ENCODE measurements at regions of chr2 and their contacts with region 1.

Region 1: DNA sequence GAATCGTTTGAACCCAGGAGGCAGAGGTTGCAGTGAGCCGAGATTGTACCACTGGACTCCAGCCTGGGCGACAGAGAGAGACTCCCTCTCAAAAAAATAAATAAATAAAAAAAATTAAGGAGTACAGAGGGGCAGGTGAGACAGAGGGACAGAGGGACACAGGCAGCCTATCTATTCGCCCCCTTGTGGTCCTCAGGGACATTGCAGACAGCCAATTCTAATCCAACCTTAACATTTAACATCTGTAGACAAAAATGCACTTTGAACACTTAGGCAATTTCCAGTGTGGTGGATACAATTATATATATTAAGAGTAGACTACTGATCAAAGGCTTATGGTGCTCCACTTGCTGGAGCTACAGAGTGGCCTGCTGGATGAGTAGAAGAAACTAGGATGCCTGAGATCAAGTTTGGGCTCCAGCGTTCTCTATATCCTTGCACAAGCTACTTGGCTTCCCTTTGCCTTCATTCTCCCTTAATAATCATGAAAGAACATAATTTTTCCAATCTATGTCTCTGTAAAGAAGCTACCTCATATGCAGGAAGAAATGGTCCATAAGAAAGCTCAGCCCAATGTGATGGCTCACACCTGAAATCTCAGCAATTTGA is 8.2 kb upstream of the SMARCAL1 start:
- DNase-seq: peak; percentile 51
- ATAC-seq: peak; percentile 51
- H3K4me3 Mint-ChIP-seq: no peak overlapping the region
- H3K27ac Mint-ChIP-seq: no peak overlapping the region
- H3K4me1 Mint-ChIP-seq: no peaks in the 10 kb centered on the region
- H3K27me3 Mint-ChIP-seq: peaks cover 30% of the 10 kb centered on the region

Region 2: GRCh38 chr2:216222650-216223352 is 181.3 kb before region 1 on chr2:
- CTCF ChIA-PET with region 1: interaction called, 13 read pairs
- DNase-seq: no peak
- ATAC-seq: no peak
- H3K4me3 Mint-ChIP-seq: no peak overlapping the region
- H3K27ac Mint-ChIP-seq: peak overlapping the region; percentile 51
- H3K4me1 Mint-ChIP-seq: peaks cover 43% of the 10 kb centered on the region
- H3K27me3 Mint-ChIP-seq: no peaks in the 10 kb centered on the region

Region 3: DNA sequence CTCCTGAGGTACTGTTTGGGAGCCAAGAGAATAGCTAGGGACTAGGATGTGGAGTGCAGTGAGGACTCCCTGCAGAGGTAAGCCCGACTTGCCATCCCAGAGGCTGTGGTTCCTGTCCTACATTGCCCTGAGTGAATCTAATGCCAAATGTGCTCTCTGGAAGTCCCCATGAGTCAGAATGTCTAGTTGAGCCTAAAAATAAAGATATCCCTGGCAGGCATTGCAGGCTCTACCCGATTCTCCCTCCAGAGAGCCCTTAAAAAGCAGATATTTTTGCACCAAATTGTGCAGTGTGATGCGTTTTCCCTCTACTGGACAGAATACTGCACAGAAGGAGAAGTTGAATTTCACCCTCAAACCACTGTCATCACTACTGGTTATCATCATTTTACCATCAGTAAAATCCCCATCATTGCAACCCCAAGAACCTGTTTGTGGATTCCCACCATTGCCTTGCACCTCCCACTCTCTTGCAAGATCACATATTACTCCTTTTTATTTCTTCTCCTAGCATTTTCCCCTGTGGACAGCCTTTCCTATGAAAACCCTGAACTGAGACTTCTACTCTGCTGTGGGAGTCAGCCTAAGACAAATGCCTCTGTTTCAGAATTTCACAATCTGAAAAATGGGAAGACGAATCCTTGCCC is 129.8 kb before region 1 on chr2:
- CTCF ChIA-PET with region 1: no interaction called
- DNase-seq: no peak
- ATAC-seq: no peak
- H3K4me3 Mint-ChIP-seq: no peak overlapping the region
- H3K27ac Mint-ChIP-seq: no peak overlapping the region
- H3K4me1 Mint-ChIP-seq: no peaks in the 10 kb centered on the region
- H3K27me3 Mint-ChIP-seq: peaks cover 23% of the 10 kb centered on the region

Region 4: GRCh38 chr2:216328347-216328746 is 75.8 kb before region 1 on chr2:
- CTCF ChIA-PET with region 1: interaction called, 12 read pairs
- DNase-seq: no peak
- ATAC-seq: no peak
- H3K4me3 Mint-ChIP-seq: no peak overlapping the region
- H3K27ac Mint-ChIP-seq: no peak overlapping the region
- H3K4me1 Mint-ChIP-seq: no peaks in the 10 kb centered on the region
- H3K27me3 Mint-ChIP-seq: peaks cover 9% of the 10 kb centered on the region

Region 5: GRCh38 chr2:216339808-216340631 is 64.1 kb before region 1 on chr2:
- CTCF ChIA-PET with region 1: no interaction called
- DNase-seq: no peak
- ATAC-seq: no peak
- H3K4me3 Mint-ChIP-seq: no peak overlapping the region
- H3K27ac Mint-ChIP-seq: no peak overlapping the region
- H3K4me1 Mint-ChIP-seq: no peaks in the 10 kb centered on the region
- H3K27me3 Mint-ChIP-seq: peaks cover 15% of the 10 kb centered on the region

Region 6: GRCh38 chr2:216352653-216353270 is 51.4 kb before region 1 on chr2:
- CTCF ChIA-PET with region 1: interaction called, 14 read pairs
- DNase-seq: no peak
- ATAC-seq: peak; percentile 63
- H3K4me3 Mint-ChIP-seq: no peak overlapping the region
- H3K27ac Mint-ChIP-seq: peak overlapping the region; percentile 80
- H3K4me1 Mint-ChIP-seq: peaks cover 59% of the 10 kb centered on the region
- H3K27me3 Mint-ChIP-seq: no peaks in the 10 kb centered on the region

Region 7: GRCh38 chr2:216436383-216436782 is 32.3 kb after region 1 on chr2:
- CTCF ChIA-PET with region 1: no interaction called
- DNase-seq: no peak
- ATAC-seq: no peak
- H3K4me3 Mint-ChIP-seq: no peak overlapping the region
- H3K27ac Mint-ChIP-seq: no peak overlapping the region
- H3K4me1 Mint-ChIP-seq: peaks cover 3% of the 10 kb centered on the region
- H3K27me3 Mint-ChIP-seq: no peaks in the 10 kb centered on the region